Left cardiac atrium (tissue), 4 donors: ENCODE measurements at regions of chr1 and their contacts with region 1.

Region 1: DNA sequence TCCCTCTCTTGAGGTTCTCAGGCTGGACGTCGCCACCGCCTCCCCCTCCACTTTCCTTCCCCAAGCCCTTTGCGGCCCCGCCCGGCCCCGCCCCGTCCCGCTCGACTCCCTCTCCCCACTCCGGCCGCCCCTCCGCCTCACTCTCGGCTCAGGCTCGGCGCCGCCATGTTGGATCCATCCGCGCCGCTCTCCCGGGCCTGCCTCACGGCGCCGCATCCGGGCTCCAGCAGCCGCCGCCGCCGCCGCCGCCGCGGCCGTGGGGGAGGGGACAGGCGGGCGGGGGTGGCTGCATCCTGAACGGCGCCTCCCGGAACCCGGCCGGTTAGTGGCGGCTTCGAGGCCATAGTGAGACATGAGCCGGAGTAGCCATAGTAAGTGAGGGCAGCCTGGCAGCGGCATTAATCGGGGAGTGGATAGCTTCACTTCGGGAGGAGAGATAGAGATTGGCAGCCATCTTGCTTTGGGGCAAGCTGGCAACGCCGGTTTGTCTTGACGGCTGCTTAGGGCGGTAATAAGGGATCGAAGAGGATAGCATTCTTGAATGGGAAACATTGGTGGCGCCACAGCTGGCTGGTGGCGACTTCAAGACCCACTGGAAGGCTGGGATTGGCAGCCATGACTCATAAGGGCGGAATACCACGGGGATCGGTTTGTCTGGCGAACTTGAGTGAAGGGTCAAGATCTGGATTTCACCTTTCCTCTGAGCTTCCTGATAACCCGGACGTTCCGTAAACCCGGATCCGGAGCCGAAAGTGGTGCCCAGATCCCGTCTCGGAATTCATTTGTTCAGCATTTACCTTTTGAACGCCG is at the start of gene DEDD:
- DNase-seq: peak; percentile 95
- ATAC-seq: peak; percentile 96
- total RNA-seq, gene DEDD: 26.1 to 30.2 TPM

Region 2: DNA sequence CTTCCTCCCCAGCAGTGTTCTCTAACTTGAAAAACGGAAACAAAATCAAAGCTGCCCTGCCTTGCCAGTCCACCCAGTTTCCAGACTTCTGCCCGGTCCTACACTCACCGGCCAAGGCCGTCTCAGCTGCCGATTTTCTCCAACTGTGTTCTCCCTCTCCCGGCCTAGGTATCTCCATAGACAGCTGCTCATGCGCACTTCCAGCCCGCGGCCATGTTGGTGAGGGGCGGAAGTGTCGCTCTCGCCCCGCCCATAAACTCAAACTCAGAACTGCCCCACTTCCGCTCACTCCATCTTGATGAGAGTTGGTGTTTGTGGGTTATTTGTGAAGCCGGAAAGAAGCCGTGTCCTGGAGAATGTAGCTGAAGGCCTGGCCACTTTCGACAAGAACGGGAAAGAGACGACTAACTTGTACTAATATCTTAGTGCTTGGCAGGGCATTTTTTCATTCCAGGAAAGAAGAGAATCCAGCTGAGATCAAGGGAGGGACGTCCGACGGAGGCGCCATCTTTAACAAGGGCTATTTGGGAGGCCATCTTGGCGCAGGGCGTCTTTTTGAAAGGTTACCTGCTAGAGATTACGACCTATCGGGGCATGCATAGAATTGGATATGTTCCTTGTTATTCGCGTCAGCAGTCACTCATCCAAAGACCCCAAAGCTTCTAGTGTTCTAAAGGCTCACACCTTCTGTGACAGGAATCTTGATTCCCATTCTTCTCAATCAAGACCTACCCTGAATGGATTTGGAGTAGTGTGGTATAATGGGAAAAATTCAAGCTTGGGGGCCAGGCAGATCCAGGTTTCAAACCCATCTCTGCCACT is 86.7 kb before region 1 on chr1 and contains the start of gene USF1:
- intact Hi-C with region 1: loop called in 1 of 2 experiments (anchors 10 kb)
- DNase-seq: peak; percentile 94
- ATAC-seq: peak; percentile 96 to 97
- total RNA-seq, gene USF1: 33.7 to 34.4 TPM